ENCODE measurements at regions of chr7 and their contacts with region 1.

Region 1: GRCh38 chr7:7416031-7416858 is 119.4 kb downstream of the COL28A1 start:
- DNase-seq: peak; percentile 87 to 100
- H3K4me3 ChIP-seq: no peak overlapping the region
- H3K27ac ChIP-seq: peak overlapping the region; percentile 84
- H3K4me1 ChIP-seq: peaks cover 36% of the 10 kb centered on the region
- H3K27me3 ChIP-seq: no peaks in the 10 kb centered on the region
- CTCF ChIP-seq: no peak

Region 2: DNA sequence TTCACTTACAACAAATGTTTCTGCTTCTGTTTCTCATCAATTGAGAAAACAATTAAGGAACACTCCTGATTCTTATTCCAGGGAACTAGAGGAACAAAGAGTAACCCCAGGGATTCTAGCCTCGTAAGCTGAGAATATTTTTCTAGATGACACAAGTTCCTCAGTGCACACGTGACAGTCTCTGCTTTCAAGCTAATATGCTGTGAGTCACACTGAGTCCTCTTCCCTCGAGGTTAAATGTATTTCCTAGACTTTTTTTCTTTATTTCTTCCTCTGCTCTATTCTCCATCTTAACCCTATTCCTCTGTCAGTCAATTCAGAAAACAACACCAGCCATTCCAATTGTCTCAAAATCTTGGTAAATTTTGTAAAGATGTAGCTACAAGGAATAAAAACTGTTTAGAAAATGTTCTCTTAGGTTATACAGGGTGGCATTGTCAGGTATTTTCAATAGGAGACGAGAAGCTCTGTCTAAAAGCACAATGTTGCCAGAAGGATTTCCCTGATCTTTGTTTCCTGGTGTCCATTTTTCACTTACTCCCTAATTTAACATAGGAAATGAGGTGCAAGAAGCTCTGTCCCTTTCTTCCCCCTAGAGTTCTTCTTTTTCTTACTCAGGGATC is 239.7 kb before region 1 on chr7:
- CTCF ChIA-PET with region 1: interaction called, 4 read pairs
- POLR2A ChIA-PET with region 1: no interaction called
- intact Hi-C with region 1: loop called (anchors 1 kb)
- DNase-seq: peak; percentile 24 to 83
- H3K4me3 ChIP-seq: peak overlapping the region; percentile 3; the same call in 1 of the 2 replicates
- H3K27ac ChIP-seq: peak overlapping the region; percentile 87
- H3K4me1 ChIP-seq: peaks cover 47% of the 10 kb centered on the region
- H3K27me3 ChIP-seq: no peaks in the 10 kb centered on the region
- CTCF ChIP-seq: no peak

Region 3: GRCh38 chr7:7272294-7272693 is 144.0 kb before region 1 on chr7:
- CTCF ChIA-PET with region 1: no interaction called
- POLR2A ChIA-PET with region 1: interaction called, 11 read pairs
- intact Hi-C with region 1: loop called (anchors 10 kb)
- DNase-seq: no peak
- H3K4me3 ChIP-seq: no peak overlapping the region
- H3K27ac ChIP-seq: peak overlapping the region; percentile 30
- H3K4me1 ChIP-seq: no peaks in the 10 kb centered on the region; the same call in 1 of the 2 replicates
- H3K27me3 ChIP-seq: no peaks in the 10 kb centered on the region
- CTCF ChIP-seq: no peak

Region 4: GRCh38 chr7:7512861-7513597 is 96.8 kb after region 1 on chr7:
- CTCF ChIA-PET with region 1: no interaction called
- POLR2A ChIA-PET with region 1: no interaction called
- intact Hi-C with region 1: no loop called
- DNase-seq: no peak
- H3K4me3 ChIP-seq: no peak overlapping the region
- H3K27ac ChIP-seq: no peak overlapping the region
- H3K4me1 ChIP-seq: no peaks in the 10 kb centered on the region
- H3K27me3 ChIP-seq: no peaks in the 10 kb centered on the region
- CTCF ChIP-seq: no peak

Region 5: GRCh38 chr7:7566651-7567611 is 150.7 kb after region 1 on chr7 and contains the start of gene MIOS:
- CTCF ChIA-PET with region 1: interaction called, 3 read pairs
- POLR2A ChIA-PET with region 1: no interaction called
- intact Hi-C with region 1: loop called (anchors 1 kb)
- DNase-seq: peak; percentile 67 to 91
- H3K4me3 ChIP-seq: peak within 1 kb of the TSS; percentile 92
- H3K27ac ChIP-seq: peak within 1 kb of the TSS; percentile 97
- H3K4me1 ChIP-seq: peaks cover 64% of the 10 kb centered on the region
- H3K27me3 ChIP-seq: no peaks in the 10 kb centered on the region
- CTCF ChIP-seq: no peak
- total RNA-seq, gene MIOS: 35.8 and 42.0 TPM in 2 replicates

Measured in PC-9 (cell line).